Right ventricle myocardium inferior (tissue), 1 donor: ENCODE measurements at regions of chr13 and their contacts with region 1.

Region 1: GRCh38 chr13:106917673-106918556 is 350.0 kb upstream of the ARGLU1 start:
- DNase-seq: peak; percentile 84
- ATAC-seq: peak; percentile 94

Region 2: GRCh38 chr13:106551350-106551749 is 366.6 kb before region 1 on chr13:
- intact Hi-C with region 1: loop called (anchors 5 kb)
- DNase-seq: no peak
- ATAC-seq: no peak

Region 3: GRCh38 chr13:106701771-106702341 is 216.1 kb before region 1 on chr13:
- intact Hi-C with region 1: loop called (anchors 5 kb)
- DNase-seq: no peak
- ATAC-seq: peak; percentile 44

Region 4: DNA sequence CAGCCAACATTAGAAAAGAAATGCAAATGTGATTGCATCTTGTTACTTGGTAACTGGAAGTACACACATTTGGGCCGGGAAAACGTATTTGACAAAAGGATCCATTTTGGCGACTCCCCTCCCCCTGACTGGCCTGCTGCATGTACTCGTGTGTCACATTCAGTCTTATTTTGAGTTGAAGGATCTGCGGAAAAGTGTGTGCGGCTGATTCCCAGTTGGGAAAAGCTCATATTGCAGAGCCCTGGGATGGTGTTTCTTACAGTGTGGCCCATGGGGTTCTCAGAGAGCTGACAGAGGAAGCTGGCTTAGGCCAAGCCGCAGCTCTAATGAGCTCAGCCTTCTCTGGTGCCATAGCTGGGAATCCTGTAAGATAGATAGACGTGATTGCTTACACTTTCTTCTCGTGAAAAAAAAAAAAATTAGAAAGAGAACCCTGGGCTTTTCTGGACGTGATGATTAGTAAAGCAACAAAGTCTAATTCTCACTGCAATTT is 179.7 kb before region 1 on chr13:
- intact Hi-C with region 1: no loop called
- DNase-seq: no peak
- ATAC-seq: no peak

Region 5: DNA sequence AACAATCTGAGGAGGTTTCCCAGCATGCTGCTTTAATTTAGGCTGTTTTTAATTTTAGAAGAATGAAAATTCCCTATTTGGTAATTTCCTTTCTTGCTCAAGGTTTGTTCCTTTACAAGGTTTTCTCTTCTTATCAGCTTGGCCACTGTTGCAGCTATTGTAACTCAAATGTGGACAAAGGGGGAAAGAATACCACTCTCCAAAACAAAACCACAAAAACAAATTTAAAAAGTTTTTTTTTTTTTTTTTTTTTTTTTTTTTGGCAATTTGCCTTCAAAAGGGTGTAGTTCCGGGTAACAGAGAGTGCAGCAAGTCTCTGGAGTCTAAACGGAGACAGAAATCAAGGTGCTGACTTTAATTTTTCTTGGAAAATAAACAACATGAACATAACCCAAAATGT is 43.6 kb before region 1 on chr13:
- intact Hi-C with region 1: loop called (anchors 5 kb)
- DNase-seq: no peak
- ATAC-seq: no peak

Region 6: DNA sequence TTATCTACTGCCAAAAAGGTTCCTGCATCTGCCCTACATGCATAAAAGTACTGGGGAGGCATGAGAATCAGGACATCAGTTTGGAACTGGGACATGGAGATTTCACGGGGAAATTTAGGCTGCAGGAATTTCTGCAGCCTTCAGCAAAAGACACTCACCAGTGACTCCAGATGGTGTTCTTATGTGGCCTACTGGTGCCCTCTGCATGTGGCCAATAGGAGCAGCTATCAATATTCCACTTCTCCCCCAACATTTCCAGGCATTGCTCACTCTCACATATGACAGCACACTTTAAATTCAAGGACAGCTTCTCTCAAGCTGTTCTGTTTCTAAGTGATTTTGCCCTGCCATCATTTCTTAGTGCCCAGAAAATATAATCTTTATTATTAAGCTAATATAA is 220.6 kb after region 1 on chr13:
- intact Hi-C with region 1: loop called (anchors 5 kb)
- DNase-seq: no peak
- ATAC-seq: no peak